ENCODE measurements at regions of chr16 and their contacts with region 1.

Region 1: DNA sequence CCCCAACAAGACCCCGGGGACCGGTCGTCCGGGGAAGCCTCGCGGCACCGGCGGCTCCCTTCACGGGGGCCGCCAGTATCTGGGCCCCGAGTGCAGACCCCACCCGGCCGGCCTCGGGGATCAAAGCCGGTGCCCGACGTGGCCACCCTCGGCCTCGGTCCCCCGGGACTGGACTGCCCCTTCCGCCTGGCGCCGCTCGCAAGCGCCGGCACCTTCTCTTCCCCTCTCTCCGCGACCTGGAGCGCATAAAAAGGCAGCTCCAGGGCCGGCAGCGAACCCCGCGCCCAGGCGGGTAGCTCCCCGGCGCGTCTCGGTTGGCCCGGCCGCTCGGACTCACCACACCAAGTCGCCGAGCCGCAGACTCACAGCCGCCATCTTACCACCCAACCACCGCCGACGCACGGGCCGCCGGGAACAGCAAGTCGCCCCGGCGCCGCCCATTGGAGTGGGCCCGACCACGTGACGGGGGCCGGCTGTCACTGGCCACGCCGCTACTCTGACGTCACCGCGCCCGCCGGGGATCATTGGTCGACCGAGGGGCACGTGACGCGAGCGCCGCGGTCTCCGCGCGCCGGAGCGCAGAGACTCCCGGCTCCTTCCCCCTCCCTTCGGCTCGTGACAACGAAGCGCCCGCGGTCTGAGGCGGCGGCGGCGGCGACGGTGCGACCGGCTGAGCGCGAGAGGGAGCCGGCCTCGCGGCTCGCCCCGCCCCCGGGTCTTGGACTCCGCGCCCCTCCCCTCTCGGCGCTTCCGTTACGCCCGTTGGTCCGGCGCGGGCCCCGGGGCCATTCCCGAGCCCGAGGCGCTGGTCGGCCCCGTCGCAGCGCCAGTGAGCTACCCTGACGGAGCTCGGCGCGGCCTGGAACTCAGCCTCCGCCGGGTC is at the starts of genes GLYR1 and UBN1:
- DNase-seq: peak; percentile 99
- ATAC-seq: peak; percentile 92
- H3K4me3 Mint-ChIP-seq: peak within 1 kb of the TSS; percentile 91
- H3K27ac Mint-ChIP-seq: peak within 1 kb of the TSS; percentile 94
- H3K4me1 Mint-ChIP-seq: peaks cover 49% of the 10 kb centered on the region
- H3K27me3 Mint-ChIP-seq: no peaks in the 10 kb centered on the region
- total RNA-seq, gene GLYR1: 92.2 to 95.7 TPM
- total RNA-seq, gene UBN1: 42.1 to 44.1 TPM

Region 2: DNA sequence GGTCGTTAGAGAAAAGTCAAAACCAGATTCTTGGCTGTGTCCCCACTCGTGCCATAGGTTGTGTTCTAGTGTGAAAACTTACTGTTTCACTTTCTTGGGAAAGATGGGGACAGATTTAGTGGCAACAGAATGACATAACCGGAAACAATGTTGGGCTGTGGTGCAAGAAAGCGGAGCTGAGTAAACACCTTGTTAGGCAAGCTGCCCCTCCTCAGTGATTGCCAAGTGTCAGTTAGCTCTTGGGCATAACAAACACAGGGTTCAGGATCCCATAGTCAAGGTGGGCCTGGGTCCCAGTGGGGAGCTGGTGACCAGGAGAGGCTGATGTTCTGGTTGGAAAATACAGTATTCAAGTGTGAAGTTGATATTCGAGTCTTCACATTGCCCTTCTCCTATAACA is 15.5 kb after region 1 on chr16:
- CTCF ChIA-PET with region 1: interaction called, 10 read pairs
- POLR2A ChIA-PET with region 1: interaction called, 4 read pairs
- DNase-seq: no peak
- ATAC-seq: no peak
- H3K4me3 Mint-ChIP-seq: no peak overlapping the region
- H3K27ac Mint-ChIP-seq: no peak overlapping the region
- H3K4me1 Mint-ChIP-seq: peaks cover 6% of the 10 kb centered on the region
- H3K27me3 Mint-ChIP-seq: no peaks in the 10 kb centered on the region

Region 3: GRCh38 chr16:4957720-4958509 is 110.8 kb after region 1 on chr16 and contains the start of gene SEC14L5:
- CTCF ChIA-PET with region 1: no interaction called
- POLR2A ChIA-PET with region 1: no interaction called
- DNase-seq: peak; percentile 96
- ATAC-seq: peak; percentile 91
- H3K4me3 Mint-ChIP-seq: peak within 1 kb of the TSS; percentile 80
- H3K27ac Mint-ChIP-seq: peak within 1 kb of the TSS; percentile 18
- H3K4me1 Mint-ChIP-seq: peaks cover 17% of the 10 kb centered on the region
- H3K27me3 Mint-ChIP-seq: peaks cover 27% of the 10 kb centered on the region
- total RNA-seq, gene SEC14L5: not detected